ENCODE measurements at regions of chr1 and their contacts with region 1.

Region 1: GRCh38 chr1:15028102-15028501 is 125.4 kb upstream of the TMEM51 start:
- DNase-seq: no peak
- ATAC-seq: no peak
- H3K4me3 ChIP-seq: no peak overlapping the region
- H3K27ac ChIP-seq: no peak overlapping the region
- H3K4me1 ChIP-seq: peaks cover 5 to 8% of the 10 kb centered on the region in 2 experiments; a peak in 1 of 5 replicates
- H3K27me3 ChIP-seq: no peaks in the 10 kb centered on the region
- CTCF ChIP-seq: no peak
- EP300 ChIP-seq: no peak
- POLR2A ChIP-seq: no peak
- RAD21 ChIP-seq: no peak

Region 2: GRCh38 chr1:14634486-14634885 is 393.6 kb before region 1 on chr1:
- CTCF ChIA-PET with region 1: no interaction called
- POLR2A ChIA-PET with region 1: no interaction called
- in situ Hi-C with region 1: no loop called
- intact Hi-C with region 1: no loop called
- DNase-seq: no peak
- ATAC-seq: no peak
- H3K4me3 ChIP-seq: no peak overlapping the region
- H3K27ac ChIP-seq: no peak overlapping the region
- H3K4me1 ChIP-seq: no peaks in the 10 kb centered on the region
- H3K27me3 ChIP-seq: peaks cover 28 to 67% of the 10 kb centered on the region in 2 experiments; a peak in 4 of 5 replicates
- CTCF ChIP-seq: no peak
- EP300 ChIP-seq: no peak
- POLR2A ChIP-seq: no peak
- RAD21 ChIP-seq: no peak

Region 3: GRCh38 chr1:14765773-14766172 is 262.3 kb before region 1 on chr1:
- CTCF ChIA-PET with region 1: no interaction called
- POLR2A ChIA-PET with region 1: no interaction called
- in situ Hi-C with region 1: no loop called
- intact Hi-C with region 1: loop called (anchors 5 kb)
- DNase-seq: no peak
- ATAC-seq: no peak
- H3K4me3 ChIP-seq: no peak overlapping the region
- H3K27ac ChIP-seq: no peak overlapping the region
- H3K4me1 ChIP-seq: peaks cover 0 to 11% of the 10 kb centered on the region in 2 experiments; a peak in 2 of 5 replicates
- H3K27me3 ChIP-seq: peaks cover 8 to 16% of the 10 kb centered on the region in 2 experiments; a peak in 3 of 5 replicates
- CTCF ChIP-seq: no peak
- EP300 ChIP-seq: no peak
- POLR2A ChIP-seq: no peak
- RAD21 ChIP-seq: no peak

Region 4: DNA sequence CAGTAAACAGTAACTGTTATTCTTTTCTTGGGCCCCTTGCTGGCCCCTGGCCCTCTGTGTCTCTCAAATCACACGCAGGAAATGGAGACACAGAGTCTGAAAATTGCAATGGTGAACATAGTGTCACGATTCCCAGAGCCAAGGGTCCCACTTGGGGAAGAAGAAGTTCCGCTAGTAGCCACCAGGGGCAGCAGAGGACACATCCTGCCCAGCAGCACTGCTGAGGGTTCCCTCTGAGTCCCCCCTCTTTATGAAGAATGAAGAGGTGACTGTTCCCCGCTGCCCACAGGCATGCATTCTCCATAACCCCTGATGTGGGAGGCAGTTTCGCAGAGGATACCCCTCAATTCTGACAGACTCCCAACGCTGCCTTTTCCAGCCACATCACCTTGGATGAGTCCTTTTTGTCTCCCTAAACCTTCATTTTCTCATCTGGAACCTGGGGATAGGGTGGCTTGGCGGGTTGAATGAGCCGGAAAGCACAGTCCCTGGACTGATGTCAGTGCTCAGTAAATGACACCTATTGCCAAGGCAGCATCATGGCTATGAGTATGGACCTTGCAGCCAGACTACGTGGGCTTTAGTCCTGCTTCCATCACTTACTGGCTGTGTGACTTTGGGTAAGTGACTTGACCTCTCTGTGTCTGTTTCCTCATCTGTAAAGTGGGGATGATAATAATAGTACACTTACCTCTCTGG is 112.6 kb before region 1 on chr1:
- CTCF ChIA-PET with region 1: interaction called, 4 read pairs
- POLR2A ChIA-PET with region 1: no interaction called
- in situ Hi-C with region 1: no loop called
- intact Hi-C with region 1: loop called (anchors 1 kb)
- DNase-seq: peak; percentile 77 to 89 (median 86)
- ATAC-seq: peak; percentile 94
- H3K4me3 ChIP-seq: no peak overlapping the region
- H3K27ac ChIP-seq: no peak overlapping the region
- H3K4me1 ChIP-seq: peaks cover 0 to 6% of the 10 kb centered on the region in 2 experiments; a peak in 1 of 5 replicates
- H3K27me3 ChIP-seq: no peaks in the 10 kb centered on the region
- CTCF ChIP-seq: peak; percentile 83 to 96 (median 90)
- EP300 ChIP-seq: no peak
- POLR2A ChIP-seq: no peak
- RAD21 ChIP-seq: peak; percentile 54 to 65

Region 5: GRCh38 chr1:14924455-14925331 is 103.4 kb before region 1 on chr1:
- CTCF ChIA-PET with region 1: interaction called, 4 read pairs
- POLR2A ChIA-PET with region 1: interaction called, 3 read pairs
- in situ Hi-C with region 1: no loop called
- intact Hi-C with region 1: loop called (anchors 5 kb)
- DNase-seq: peak; percentile 72 to 88 (median 82)
- ATAC-seq: peak; percentile 78
- H3K4me3 ChIP-seq: peak overlapping the region; percentile 59
- H3K27ac ChIP-seq: peak overlapping the region; percentile 1; the same call in 1 of the 3 replicates
- H3K4me1 ChIP-seq: peaks cover 29 to 33% of the 10 kb centered on the region in 2 experiments
- H3K27me3 ChIP-seq: no peaks in the 10 kb centered on the region; a peak in 1 of 5 replicates
- CTCF ChIP-seq: peak in 2 of 3 experiments; percentile 41 to 42; a peak in 3 of 6 replicates
- EP300 ChIP-seq: no peak
- POLR2A ChIP-seq: no peak
- RAD21 ChIP-seq: peak; percentile 39 to 55; a peak in 3 of 4 replicates

Region 6: GRCh38 chr1:15106608-15107007 is 78.5 kb after region 1 on chr1:
- CTCF ChIA-PET with region 1: no interaction called
- POLR2A ChIA-PET with region 1: no interaction called
- in situ Hi-C with region 1: no loop called
- intact Hi-C with region 1: no loop called
- DNase-seq: peak in 1 of 4 experiments; percentile 68
- ATAC-seq: peak; percentile 60
- H3K4me3 ChIP-seq: no peak overlapping the region
- H3K27ac ChIP-seq: no peak overlapping the region
- H3K4me1 ChIP-seq: 0 out of 5 replicates have a peak, but pooled peaks cover 0 to 2% of the 10 kb centered on the region in 2 experiments
- H3K27me3 ChIP-seq: peaks cover under 1 to 14% of the 10 kb centered on the region in 2 experiments; a peak in 2 of 5 replicates
- CTCF ChIP-seq: no peak
- EP300 ChIP-seq: no peak
- POLR2A ChIP-seq: no peak
- RAD21 ChIP-seq: no peak